ENCODE measurements at regions of chr6 and their contacts with region 1.

Region 1: DNA sequence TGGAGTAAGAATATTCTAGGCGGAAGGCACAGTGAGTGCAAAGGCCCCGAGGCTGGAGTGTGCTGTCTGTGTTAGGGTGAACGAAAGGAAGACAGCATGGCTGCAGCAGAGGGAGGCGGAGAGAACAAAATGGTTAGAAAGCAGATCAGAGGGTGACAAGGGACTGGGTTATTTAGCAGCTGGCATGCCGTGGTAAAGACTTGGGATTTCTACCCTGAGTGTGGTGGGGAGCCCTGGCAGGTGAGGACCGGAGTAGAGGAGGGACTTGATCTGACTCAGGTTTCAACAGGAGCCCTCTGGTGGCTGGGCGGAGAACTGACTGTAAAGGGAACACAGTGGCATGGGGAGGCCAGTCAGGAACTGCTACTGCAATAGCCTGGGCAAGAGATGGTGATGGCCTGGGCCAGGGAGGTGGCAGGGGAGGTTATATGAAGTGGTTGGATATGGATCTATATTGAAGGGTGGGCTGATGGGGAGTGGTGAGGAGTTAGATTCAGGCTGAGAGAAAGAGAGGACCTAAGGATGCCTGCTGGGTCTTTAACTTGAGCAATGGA is 38.0 kb downstream of the PIM1 start:
- DNase-seq: peak; percentile 94
- H3K4me3 Mint-ChIP-seq: peak overlapping the region; percentile 17
- H3K27ac Mint-ChIP-seq: peak overlapping the region; percentile 78
- H3K4me1 Mint-ChIP-seq: peaks cover 67% of the 10 kb centered on the region
- H3K27me3 Mint-ChIP-seq: no peaks in the 10 kb centered on the region

Region 2: DNA sequence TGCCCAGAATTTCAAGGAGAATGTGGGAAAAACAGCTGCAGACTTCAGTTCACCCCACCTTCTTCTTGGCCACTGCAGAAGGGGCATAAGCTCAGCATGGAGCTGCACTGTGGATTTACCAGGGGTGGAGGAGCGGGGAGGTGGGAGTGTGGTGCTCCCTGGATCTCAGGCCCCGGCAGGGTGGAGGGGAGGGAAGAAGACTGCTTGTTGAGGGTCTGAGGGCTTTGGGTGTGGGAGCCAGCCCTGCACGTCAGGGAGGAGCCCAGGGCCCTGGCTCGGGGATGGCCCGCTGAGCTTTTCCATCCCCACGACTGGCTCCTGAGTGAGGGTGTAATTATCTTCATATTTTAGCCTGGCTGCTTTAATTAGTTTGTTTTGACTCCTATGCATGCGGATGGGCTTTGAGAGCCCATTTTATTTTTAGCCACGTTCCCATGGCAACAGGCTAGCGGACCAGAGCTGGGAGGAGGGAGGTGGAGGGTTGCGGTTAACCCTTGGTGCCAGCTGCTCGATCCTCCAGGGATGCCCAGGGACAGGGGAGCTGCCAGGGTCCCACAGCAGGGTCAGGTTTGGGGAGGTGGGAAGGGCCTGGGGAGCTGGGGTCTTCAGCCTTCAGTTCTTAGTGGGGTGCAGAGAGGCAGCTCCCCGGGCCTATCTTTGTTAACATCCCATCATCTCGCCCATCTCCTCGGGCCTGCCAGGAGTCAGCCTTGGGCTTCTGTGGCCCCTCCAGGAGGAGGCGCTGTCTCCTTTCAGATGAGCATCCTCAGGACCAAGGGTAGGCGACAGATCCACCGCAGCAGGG is 442.2 kb before region 1 on chr6:
- CTCF ChIA-PET with region 1: interaction called, 11 read pairs
- POLR2A ChIA-PET with region 1: no interaction called
- DNase-seq: peak; percentile 87
- H3K4me3 Mint-ChIP-seq: no peak overlapping the region
- H3K27ac Mint-ChIP-seq: no peak overlapping the region
- H3K4me1 Mint-ChIP-seq: peaks cover 39% of the 10 kb centered on the region
- H3K27me3 Mint-ChIP-seq: no peaks in the 10 kb centered on the region

Region 3: DNA sequence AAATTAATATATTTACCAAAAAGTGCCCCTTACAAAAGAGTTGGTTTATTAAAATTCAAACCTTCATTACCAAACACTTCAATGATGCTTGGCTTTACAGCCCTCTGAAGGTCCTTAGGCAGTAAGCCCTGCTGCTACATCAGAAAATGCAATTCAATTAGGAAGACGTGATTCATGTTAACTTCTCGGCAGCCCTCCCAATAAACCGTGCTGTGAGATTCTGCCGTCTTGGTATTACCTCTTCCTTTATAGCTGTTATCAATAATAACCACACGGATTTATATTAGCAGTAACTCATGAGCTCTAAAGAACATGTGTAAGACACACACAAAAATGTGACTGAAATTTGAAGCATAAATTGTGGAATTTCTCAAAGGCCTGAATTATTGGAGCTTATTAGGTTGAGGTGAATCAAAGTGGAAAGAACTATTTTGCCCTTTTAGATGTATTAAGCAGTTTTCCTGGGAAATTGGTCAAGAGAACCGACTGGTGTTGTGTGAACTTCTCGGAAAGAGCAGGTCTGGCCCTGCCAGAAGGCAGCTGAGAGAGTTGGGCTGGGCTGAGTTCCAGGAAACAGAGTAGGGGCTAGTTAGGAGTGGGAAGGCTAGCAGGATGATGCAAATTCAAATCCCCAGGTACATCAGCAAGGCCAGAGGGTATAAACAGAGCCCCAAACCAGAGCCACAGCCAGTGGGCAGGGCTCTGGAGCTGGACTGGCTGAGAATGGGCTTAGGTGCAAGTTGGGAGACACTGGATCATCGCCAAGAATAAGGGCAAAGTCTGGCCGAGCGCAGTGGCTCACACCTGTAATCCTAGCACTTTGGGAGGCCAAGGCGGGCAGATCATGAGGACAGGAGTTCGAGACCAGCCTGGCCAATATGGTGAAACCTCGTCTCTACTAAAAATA is 169.4 kb before region 1 on chr6:
- CTCF ChIA-PET with region 1: interaction called, 786 read pairs
- POLR2A ChIA-PET with region 1: no interaction called
- DNase-seq: no peak
- H3K4me3 Mint-ChIP-seq: no peak overlapping the region
- H3K27ac Mint-ChIP-seq: peak overlapping the region; percentile 33
- H3K4me1 Mint-ChIP-seq: peaks cover 54% of the 10 kb centered on the region
- H3K27me3 Mint-ChIP-seq: no peaks in the 10 kb centered on the region

Region 4: GRCh38 chr6:37182736-37183590 is 25.0 kb before region 1 on chr6:
- CTCF ChIA-PET with region 1: interaction called, 143 read pairs
- POLR2A ChIA-PET with region 1: interaction called, 525 read pairs
- DNase-seq: peak; percentile 84
- H3K4me3 Mint-ChIP-seq: peak overlapping the region; percentile 46
- H3K27ac Mint-ChIP-seq: peak overlapping the region; percentile 97
- H3K4me1 Mint-ChIP-seq: peaks cover 77% of the 10 kb centered on the region
- H3K27me3 Mint-ChIP-seq: no peaks in the 10 kb centered on the region

Region 5: GRCh38 chr6:37222125-37222967 is 14.4 kb after region 1 on chr6:
- CTCF ChIA-PET with region 1: interaction called, 11 read pairs
- POLR2A ChIA-PET with region 1: interaction called, 3 read pairs
- DNase-seq: peak; percentile 79
- H3K4me3 Mint-ChIP-seq: peak overlapping the region; percentile 77
- H3K27ac Mint-ChIP-seq: no peak overlapping the region
- H3K4me1 Mint-ChIP-seq: peaks cover 26% of the 10 kb centered on the region
- H3K27me3 Mint-ChIP-seq: no peaks in the 10 kb centered on the region